PC-3 (cell line): ENCODE measurements at regions of chr5 and their contacts with region 1.

Region 1: GRCh38 chr5:11289740-11290139 is 528.7 kb upstream of the DAP start:
- DNase-seq: no peak
- ATAC-seq: no peak
- H3K4me3 ChIP-seq: no peak overlapping the region
- H3K27ac ChIP-seq: no peak overlapping the region
- H3K4me1 ChIP-seq: peaks cover 6% of the 10 kb centered on the region; the same call in 1 of the 2 replicates
- H3K27me3 ChIP-seq: peaks cover 39% of the 10 kb centered on the region
- CTCF ChIP-seq: peak; percentile 38

Region 2: GRCh38 chr5:11191673-11192072 is 98.1 kb before region 1 on chr5:
- CTCF ChIA-PET with region 1: no interaction called
- POLR2A ChIA-PET with region 1: no interaction called
- intact Hi-C with region 1: no loop called
- DNase-seq: no peak
- ATAC-seq: no peak
- H3K4me3 ChIP-seq: no peak overlapping the region
- H3K27ac ChIP-seq: no peak overlapping the region
- H3K4me1 ChIP-seq: no peaks in the 10 kb centered on the region
- H3K27me3 ChIP-seq: peaks cover 10% of the 10 kb centered on the region; the same call in 1 of the 2 replicates
- CTCF ChIP-seq: no peak

Region 3: GRCh38 chr5:11384441-11385250 is 94.9 kb after region 1 on chr5:
- CTCF ChIA-PET with region 1: no interaction called
- POLR2A ChIA-PET with region 1: no interaction called
- intact Hi-C with region 1: loop called (anchors 10 kb)
- DNase-seq: peak; percentile 46
- ATAC-seq: peak; percentile 68
- H3K4me3 ChIP-seq: peak overlapping the region; percentile 68
- H3K27ac ChIP-seq: no peak overlapping the region
- H3K4me1 ChIP-seq: peaks cover 13% of the 10 kb centered on the region
- H3K27me3 ChIP-seq: peaks cover 60% of the 10 kb centered on the region
- CTCF ChIP-seq: 0 out of 2 replicates have a peak, but pooled peaks have one; percentile 16

Region 4: DNA sequence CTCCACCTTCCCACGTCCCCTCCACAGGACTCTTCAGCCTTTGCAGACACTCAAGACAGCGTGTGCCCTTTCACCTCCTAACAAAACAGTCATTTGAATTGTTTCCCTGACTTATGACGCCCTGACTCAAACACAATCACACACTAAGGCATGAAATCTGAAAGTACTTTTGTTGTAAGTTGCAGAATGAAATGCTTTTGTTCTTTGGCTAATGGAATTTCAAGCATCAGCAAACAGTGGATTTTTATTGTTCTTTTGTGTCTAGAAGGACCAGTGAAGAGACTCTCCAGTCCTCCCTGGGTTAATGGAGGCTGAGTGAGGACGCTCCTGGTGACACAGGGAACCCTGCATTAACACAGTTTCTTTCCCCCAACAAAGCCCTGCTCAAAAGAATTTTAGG is 234.4 kb after region 1 on chr5:
- CTCF ChIA-PET with region 1: no interaction called
- POLR2A ChIA-PET with region 1: no interaction called
- intact Hi-C with region 1: no loop called
- DNase-seq: no peak
- ATAC-seq: no peak
- H3K4me3 ChIP-seq: no peak overlapping the region
- H3K27ac ChIP-seq: no peak overlapping the region
- H3K4me1 ChIP-seq: no peaks in the 10 kb centered on the region
- H3K27me3 ChIP-seq: peaks cover 8% of the 10 kb centered on the region; the same call in 1 of the 2 replicates
- CTCF ChIP-seq: no peak